Panc1 (cell line): ENCODE measurements at regions of chr6 and their contacts with region 1.

Region 1: DNA sequence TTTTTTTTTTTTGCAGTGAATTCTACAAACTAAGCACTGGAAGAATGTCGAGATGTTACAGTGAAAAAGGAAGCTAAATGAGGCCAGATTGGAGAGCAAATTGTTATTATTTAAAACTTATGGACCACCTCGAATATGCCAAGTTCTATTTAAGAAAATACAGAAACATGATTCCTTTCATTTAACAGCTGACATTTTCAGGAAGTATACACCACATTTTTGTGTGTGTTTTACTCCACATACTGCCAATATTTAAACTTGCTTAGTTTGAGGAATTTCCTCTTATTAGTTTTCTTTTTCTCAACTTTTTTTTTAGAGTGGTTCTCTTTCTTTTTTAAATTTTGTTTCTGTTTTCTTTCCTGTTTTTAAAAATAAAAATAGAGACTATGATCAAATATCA is 37.0 kb upstream of the GCLC start:
- DNase-seq: no peak
- ATAC-seq: no peak
- H3K4me3 ChIP-seq: no peak overlapping the region
- H3K27ac ChIP-seq: no peak overlapping the region
- H3K4me1 ChIP-seq: no peaks in the 10 kb centered on the region
- H3K27me3 ChIP-seq: no peaks in the 10 kb centered on the region
- CTCF ChIP-seq: no peak

Region 2: GRCh38 chr6:52846002-52846401 is 735.9 kb before region 1 on chr6:
- CTCF ChIA-PET with region 1: no interaction called
- POLR2A ChIA-PET with region 1: no interaction called
- in situ Hi-C with region 1: no loop called
- intact Hi-C with region 1: no loop called
- DNase-seq: no peak
- ATAC-seq: no peak
- H3K4me3 ChIP-seq: no peak overlapping the region
- H3K27ac ChIP-seq: no peak overlapping the region
- H3K4me1 ChIP-seq: no peaks in the 10 kb centered on the region
- H3K27me3 ChIP-seq: peaks cover 2% of the 10 kb centered on the region; the same call in 1 of the 2 replicates
- CTCF ChIP-seq: no peak

Region 3: DNA sequence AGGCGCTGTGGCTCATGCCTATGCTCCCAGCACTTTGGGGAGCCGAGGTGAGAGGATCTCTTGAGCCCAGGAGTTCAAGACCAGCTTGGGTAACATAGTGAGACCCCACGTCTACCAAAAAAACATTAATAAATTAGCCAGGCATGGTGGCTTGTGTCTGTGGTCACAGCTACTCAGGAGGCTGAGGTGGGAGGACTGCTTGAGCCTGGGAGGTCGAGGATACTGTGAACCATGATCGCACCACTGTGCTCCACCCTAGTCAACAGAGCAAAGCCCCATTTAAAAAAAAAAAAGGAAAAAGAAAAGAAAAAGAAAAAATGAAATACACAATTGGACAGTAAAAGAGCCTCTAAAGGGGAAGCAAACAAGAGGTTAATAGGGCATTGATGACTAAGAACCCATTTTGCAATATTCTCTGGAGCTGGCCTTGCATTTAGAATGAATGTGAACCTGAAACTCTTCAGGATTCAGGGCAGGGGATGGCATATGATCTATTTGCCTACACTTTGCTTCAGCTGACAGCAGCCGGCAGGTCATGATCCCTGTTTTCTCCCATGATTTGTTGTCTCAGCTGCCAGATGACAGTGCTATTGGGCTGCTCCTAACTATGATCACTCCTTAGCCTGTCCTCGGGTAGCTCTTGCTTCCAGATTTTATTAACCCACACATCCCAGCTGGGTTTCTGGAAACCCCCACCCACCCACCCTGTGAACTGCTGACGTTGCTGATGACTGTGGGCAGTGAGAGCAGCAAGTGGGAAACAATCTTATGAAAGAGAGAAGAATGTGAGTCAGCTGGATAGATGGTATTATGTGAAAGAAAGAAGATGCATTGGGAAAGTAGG is 149.3 kb before region 1 on chr6:
- CTCF ChIA-PET with region 1: no interaction called
- POLR2A ChIA-PET with region 1: no interaction called
- in situ Hi-C with region 1: no loop called
- intact Hi-C with region 1: no loop called
- DNase-seq: no peak
- ATAC-seq: no peak
- H3K4me3 ChIP-seq: no peak overlapping the region
- H3K27ac ChIP-seq: no peak overlapping the region
- H3K4me1 ChIP-seq: peaks cover 4% of the 10 kb centered on the region; the same call in 1 of the 2 replicates
- H3K27me3 ChIP-seq: no peaks in the 10 kb centered on the region; the same call in 1 of the 2 replicates
- CTCF ChIP-seq: no peak

Region 4: GRCh38 chr6:53556986-53557715 is 24.7 kb before region 1 on chr6:
- CTCF ChIA-PET with region 1: no interaction called
- POLR2A ChIA-PET with region 1: interaction called, 13 read pairs
- in situ Hi-C with region 1: no loop called
- intact Hi-C with region 1: no loop called
- DNase-seq: no peak
- ATAC-seq: no peak
- H3K4me3 ChIP-seq: no peak overlapping the region
- H3K27ac ChIP-seq: no peak overlapping the region
- H3K4me1 ChIP-seq: no peaks in the 10 kb centered on the region
- H3K27me3 ChIP-seq: no peaks in the 10 kb centered on the region
- CTCF ChIP-seq: no peak

Region 5: GRCh38 chr6:53906842-53907241 is 325.0 kb after region 1 on chr6:
- CTCF ChIA-PET with region 1: no interaction called
- POLR2A ChIA-PET with region 1: no interaction called
- in situ Hi-C with region 1: no loop called
- intact Hi-C with region 1: no loop called
- DNase-seq: no peak
- ATAC-seq: no peak; the same call in 1 of the 2 replicates
- H3K4me3 ChIP-seq: no peak overlapping the region
- H3K27ac ChIP-seq: no peak overlapping the region
- H3K4me1 ChIP-seq: no peaks in the 10 kb centered on the region
- H3K27me3 ChIP-seq: no peaks in the 10 kb centered on the region
- CTCF ChIP-seq: no peak